SK-N-SH (cell line): ENCODE measurements at regions of chr5 and their contacts with region 1.

Region 1: GRCh38 chr5:36507332-36507952 is 99.0 kb upstream of the SLC1A3 start:
- DNase-seq: peak; percentile 62
- H3K4me3 ChIP-seq: no peak overlapping the region; a peak in 1 of 4 replicates
- H3K27ac ChIP-seq: no peak overlapping the region
- H3K4me1 ChIP-seq: no peaks in the 10 kb centered on the region
- H3K27me3 ChIP-seq: peaks cover 6% of the 10 kb centered on the region; the same call in 1 of the 2 replicates
- CTCF ChIP-seq: peak; percentile 90
- EP300 ChIP-seq: no peak
- RAD21 ChIP-seq: peak; percentile 73

Region 2: GRCh38 chr5:36414869-36415282 is 92.6 kb before region 1 on chr5:
- CTCF ChIA-PET with region 1: interaction called, 20 read pairs
- POLR2A ChIA-PET with region 1: no interaction called
- DNase-seq: peak; percentile 26
- H3K4me3 ChIP-seq: no peak overlapping the region; a peak in 1 of 4 replicates
- H3K27ac ChIP-seq: no peak overlapping the region
- H3K4me1 ChIP-seq: no peaks in the 10 kb centered on the region
- H3K27me3 ChIP-seq: peaks cover 38% of the 10 kb centered on the region; the same call in 1 of the 2 replicates
- CTCF ChIP-seq: peak; percentile 71
- EP300 ChIP-seq: no peak
- RAD21 ChIP-seq: peak; percentile 72

Region 3: DNA sequence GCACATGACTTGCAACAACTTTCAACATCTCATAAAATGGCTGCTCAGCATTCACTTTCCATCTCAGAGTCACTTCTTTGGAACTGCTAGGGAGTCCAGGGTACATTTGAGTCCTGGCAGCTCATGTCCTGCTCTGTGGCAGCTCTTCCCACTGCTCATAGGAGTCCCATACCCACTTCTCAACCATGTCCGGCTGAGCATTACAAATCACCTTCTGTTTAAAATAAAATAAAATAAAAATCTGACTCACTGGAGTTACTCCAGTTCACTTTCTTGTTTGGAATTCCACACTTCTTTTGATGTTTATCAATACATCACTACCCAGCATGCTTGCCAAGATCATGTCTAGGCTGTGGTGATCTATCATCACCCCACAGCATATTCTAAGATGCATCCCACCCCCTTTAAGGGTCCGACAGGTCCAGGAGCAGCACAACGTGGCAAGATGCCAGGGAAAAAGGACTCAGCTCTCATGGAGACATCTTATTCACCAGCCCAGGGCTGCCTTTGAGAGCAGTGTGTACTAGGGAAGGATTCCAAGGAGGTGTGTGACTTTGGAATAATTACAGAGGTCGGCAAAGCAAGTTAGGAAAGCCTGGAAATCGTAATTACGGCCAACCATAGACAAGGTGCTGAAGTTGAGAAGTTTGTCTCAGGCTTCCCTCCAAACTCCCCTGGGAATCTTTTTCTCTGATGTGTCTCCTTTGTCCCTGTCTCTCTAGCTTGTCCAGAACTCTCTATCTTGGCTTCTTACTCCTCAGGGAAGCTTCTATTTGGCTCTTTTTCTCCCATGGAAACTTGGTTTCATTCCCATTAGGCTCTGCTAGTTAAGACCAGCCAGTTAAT is 12.5 kb before region 1 on chr5:
- CTCF ChIA-PET with region 1: interaction called, 19 read pairs
- POLR2A ChIA-PET with region 1: no interaction called
- DNase-seq: no peak
- H3K4me3 ChIP-seq: no peak overlapping the region
- H3K27ac ChIP-seq: no peak overlapping the region
- H3K4me1 ChIP-seq: peaks cover 0 to 9% of the 10 kb centered on the region in 2 experiments; a peak in 1 of 4 replicates
- H3K27me3 ChIP-seq: peaks cover 10% of the 10 kb centered on the region; the same call in 1 of the 2 replicates
- CTCF ChIP-seq: no peak
- EP300 ChIP-seq: no peak
- RAD21 ChIP-seq: no peak

Region 4: DNA sequence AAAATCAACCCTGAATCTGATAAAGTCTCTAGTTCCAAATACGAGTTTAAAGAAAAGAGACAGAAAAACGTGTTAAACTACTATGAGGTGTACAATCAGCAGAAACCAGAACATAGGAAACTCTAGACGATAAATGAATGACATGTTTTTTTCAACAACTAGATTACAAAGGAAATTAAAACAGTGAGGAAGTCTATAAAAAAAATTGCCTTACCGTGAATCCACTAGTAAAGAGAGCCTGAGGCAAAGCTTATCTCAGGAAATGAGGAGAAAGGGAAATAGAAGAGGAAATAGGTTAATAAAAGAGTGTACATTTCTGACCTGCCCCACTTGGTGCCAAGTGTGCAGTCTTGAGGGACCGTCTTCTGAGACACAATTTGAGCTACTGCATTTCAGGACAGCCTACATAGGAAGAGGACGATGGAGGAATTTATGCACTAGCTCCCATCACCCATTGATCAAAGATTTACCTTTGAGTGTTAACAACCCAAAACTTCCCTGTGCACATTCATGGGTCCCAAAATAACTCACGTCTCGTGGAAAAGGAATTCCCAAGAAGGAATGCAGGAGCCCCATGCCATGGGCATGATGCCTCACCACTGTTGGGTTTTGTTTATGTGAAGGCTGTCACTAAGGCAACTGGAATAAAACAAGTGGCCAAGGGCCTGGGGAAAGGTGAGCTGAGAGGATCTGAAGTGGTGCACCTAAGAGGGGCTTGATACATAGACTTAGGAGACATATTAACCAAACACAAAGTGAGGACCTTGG is 45.4 kb after region 1 on chr5:
- CTCF ChIA-PET with region 1: no interaction called
- POLR2A ChIA-PET with region 1: no interaction called
- DNase-seq: no peak
- H3K4me3 ChIP-seq: no peak overlapping the region
- H3K27ac ChIP-seq: no peak overlapping the region
- H3K4me1 ChIP-seq: no peaks in the 10 kb centered on the region
- H3K27me3 ChIP-seq: no peaks in the 10 kb centered on the region
- CTCF ChIP-seq: no peak
- EP300 ChIP-seq: no peak
- RAD21 ChIP-seq: no peak

Region 5: GRCh38 chr5:36690041-36690961 is 182.9 kb after region 1 on chr5:
- CTCF ChIA-PET with region 1: interaction called, 73 read pairs
- POLR2A ChIA-PET with region 1: no interaction called
- DNase-seq: peak; percentile 91
- H3K4me3 ChIP-seq: peak overlapping the region; percentile 56 to 67
- H3K27ac ChIP-seq: no peak overlapping the region
- H3K4me1 ChIP-seq: peaks cover 0 to 3% of the 10 kb centered on the region in 2 experiments; a peak in 1 of 4 replicates
- H3K27me3 ChIP-seq: peaks cover 7% of the 10 kb centered on the region; the same call in 1 of the 2 replicates
- CTCF ChIP-seq: peak; percentile 72
- EP300 ChIP-seq: no peak
- RAD21 ChIP-seq: peak; percentile 48